OCI-LY7 (cell line): ENCODE measurements at regions of chr5 and their contacts with region 1.

Region 1: DNA sequence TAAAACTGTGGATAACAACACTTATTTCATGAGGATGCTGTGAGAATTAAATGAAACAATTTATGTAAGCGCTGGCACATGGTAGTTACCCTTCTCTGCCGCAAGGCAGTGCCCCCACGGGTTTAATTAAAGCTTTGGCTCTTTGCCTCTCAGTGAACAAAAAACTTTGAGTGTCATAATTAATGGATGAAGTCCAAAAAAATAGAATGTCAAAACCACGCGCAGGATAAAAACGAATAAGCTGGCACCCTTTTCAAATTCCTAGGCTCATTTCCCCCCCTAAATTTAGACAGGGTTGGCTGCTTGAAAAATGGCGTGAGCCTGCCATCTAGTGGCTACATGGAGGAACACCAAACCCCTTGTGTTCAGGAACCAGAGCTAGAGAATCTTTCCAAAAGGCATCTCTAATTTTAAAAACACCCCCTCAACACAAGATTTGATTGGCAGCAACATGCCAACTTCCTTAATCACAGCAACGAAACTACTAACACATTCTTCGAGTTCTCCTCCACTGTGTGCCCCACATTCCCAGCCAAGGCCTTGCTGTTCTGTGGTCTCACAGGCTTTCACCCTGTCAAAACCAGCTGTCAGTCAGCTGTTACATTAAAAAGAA is 29.0 kb upstream of the CCNG1 start:
- DNase-seq: peak; percentile 69
- H3K4me3 ChIP-seq: no peak overlapping the region
- H3K27ac ChIP-seq: no peak overlapping the region
- H3K4me1 ChIP-seq: no peaks in the 10 kb centered on the region
- CTCF ChIP-seq: peak; percentile 100

Region 2: GRCh38 chr5:162209005-162209605 is 1199.3 kb before region 1 on chr5:
- CTCF ChIA-PET with region 1: no interaction called
- POLR2A ChIA-PET with region 1: no interaction called
- intact Hi-C with region 1: loop called (anchors 5 kb)
- DNase-seq: peak; percentile 45
- H3K4me3 ChIP-seq: no peak overlapping the region
- H3K27ac ChIP-seq: no peak overlapping the region
- H3K4me1 ChIP-seq: no peaks in the 10 kb centered on the region
- CTCF ChIP-seq: peak; percentile 60

Region 3: DNA sequence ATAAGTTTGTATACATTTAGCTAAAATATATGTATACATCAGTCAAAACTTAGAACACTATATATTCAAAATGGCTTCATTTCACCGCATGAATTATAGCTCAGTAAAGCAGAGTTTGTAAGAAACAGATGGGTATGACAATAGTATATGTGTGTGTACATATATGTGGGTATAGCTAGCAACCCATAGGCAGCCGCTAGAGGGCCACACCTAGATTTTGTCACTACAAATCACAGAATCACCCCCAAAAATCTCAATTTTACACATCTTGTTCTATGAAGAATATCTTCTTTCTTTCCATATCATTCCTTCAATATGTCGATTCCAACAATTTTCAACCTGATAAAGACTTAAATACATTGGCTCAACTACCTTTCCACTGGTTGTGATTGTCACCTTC is 328.8 kb before region 1 on chr5:
- CTCF ChIA-PET with region 1: no interaction called
- POLR2A ChIA-PET with region 1: no interaction called
- intact Hi-C with region 1: loop called (anchors 10 kb)
- DNase-seq: peak; percentile 5
- H3K4me3 ChIP-seq: no peak overlapping the region
- H3K27ac ChIP-seq: no peak overlapping the region
- H3K4me1 ChIP-seq: no peaks in the 10 kb centered on the region
- CTCF ChIP-seq: peak; percentile 75

Region 4: DNA sequence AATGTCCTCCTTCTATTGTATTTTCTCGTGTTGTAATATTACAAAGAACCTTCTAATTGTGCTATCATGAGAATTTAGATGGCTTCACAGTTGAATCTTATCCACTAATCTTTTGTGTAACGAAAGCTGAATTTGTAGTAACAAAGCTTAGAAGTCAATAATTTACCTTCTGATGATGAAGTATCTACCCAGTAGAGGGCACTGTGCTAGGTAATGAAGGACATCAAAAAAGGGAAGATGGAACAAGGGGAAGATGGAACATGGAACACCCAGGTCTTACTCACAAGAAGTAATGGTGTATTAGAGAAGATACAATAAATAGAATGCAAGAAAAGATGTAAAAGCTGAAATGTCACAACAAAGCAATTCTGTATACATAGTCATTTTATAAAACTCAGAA is 102.0 kb before region 1 on chr5:
- CTCF ChIA-PET with region 1: interaction called, 6 read pairs
- POLR2A ChIA-PET with region 1: interaction called, 3 read pairs
- intact Hi-C with region 1: loop called (anchors 2 kb)
- DNase-seq: peak; percentile 30
- H3K4me3 ChIP-seq: no peak overlapping the region
- H3K27ac ChIP-seq: no peak overlapping the region
- H3K4me1 ChIP-seq: no peaks in the 10 kb centered on the region
- CTCF ChIP-seq: peak; percentile 80

Region 5: DNA sequence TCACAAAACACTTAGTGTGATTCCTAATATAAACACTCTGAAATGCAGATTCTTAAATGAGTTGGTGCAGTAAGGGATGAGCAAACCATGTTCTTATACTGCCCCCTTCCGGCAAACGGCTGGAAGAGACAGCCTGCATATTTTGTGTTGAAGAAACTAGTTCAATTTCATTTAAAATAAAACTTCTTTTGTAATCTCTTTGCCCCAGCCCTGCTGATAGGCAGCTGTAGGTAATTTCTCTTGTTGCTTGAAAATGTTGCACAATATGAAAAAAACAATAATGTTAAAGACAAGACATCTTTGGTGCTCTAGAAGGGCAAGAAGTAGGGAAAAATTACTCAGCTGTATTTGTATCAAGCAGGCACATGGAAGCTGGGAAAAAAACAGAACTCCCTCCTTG is 60.7 kb before region 1 on chr5:
- CTCF ChIA-PET with region 1: no interaction called
- POLR2A ChIA-PET with region 1: no interaction called
- intact Hi-C with region 1: loop called (anchors 2 kb)
- DNase-seq: peak; percentile 70
- H3K4me3 ChIP-seq: no peak overlapping the region
- H3K27ac ChIP-seq: no peak overlapping the region
- H3K4me1 ChIP-seq: no peaks in the 10 kb centered on the region
- CTCF ChIP-seq: peak; percentile 99